Posterior vena cava (tissue), 2 donors: ENCODE measurements at regions of chr5 and their contacts with region 1.

Region 1: GRCh38 chr5:31800351-31800750 is 161.4 kb downstream of the PDZD2 start:
- DNase-seq: no peak

Region 2: DNA sequence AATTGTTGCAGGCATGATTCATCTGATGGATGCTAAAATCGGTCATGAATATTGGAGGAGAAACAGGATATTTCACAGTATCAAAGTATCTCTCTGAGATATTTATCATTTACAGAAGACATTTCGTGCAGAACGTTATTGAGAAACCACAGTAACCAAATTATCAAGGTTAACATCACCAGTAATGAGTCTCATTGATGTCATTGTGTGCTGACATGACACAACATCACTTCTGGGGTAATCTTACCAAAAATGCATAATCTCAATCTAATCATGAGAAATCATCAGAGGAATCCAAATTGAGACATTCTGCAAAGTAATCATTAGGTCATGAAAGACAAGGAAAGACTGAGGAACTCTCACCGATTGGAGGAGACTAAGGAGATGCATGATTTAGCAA is 225.6 kb before region 1 on chr5:
- intact Hi-C with region 1: loop called in 1 of 2 experiments (anchors 5 kb)
- DNase-seq: no peak

Region 3: DNA sequence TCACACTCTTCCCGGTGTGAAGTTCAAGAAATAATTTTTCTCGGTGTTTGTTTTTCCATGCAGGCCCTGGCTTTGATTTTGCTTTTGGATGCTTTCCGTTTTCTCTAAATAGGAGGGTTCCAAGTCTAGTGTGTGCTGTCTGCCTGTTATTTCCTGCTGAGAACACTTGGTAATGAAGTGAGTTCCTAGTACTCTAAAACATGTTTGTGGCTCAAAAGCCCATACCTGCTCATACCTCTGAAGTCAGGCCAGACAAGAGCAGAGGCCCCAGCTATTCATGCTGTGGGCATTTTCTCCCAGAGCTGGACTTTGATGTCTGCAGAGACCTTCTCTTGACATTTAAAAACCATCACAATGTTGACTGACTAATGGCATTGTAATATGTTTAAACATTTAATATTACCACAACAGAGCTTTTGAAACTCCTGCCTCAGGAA is 162.5 kb after region 1 on chr5:
- intact Hi-C with region 1: no loop called
- DNase-seq: no peak

Region 4: GRCh38 chr5:32261198-32261597 is 460.8 kb after region 1 on chr5:
- intact Hi-C with region 1: no loop called
- DNase-seq: no peak